ENCODE measurements at regions of chr4 and their contacts with region 1.

Region 1: DNA sequence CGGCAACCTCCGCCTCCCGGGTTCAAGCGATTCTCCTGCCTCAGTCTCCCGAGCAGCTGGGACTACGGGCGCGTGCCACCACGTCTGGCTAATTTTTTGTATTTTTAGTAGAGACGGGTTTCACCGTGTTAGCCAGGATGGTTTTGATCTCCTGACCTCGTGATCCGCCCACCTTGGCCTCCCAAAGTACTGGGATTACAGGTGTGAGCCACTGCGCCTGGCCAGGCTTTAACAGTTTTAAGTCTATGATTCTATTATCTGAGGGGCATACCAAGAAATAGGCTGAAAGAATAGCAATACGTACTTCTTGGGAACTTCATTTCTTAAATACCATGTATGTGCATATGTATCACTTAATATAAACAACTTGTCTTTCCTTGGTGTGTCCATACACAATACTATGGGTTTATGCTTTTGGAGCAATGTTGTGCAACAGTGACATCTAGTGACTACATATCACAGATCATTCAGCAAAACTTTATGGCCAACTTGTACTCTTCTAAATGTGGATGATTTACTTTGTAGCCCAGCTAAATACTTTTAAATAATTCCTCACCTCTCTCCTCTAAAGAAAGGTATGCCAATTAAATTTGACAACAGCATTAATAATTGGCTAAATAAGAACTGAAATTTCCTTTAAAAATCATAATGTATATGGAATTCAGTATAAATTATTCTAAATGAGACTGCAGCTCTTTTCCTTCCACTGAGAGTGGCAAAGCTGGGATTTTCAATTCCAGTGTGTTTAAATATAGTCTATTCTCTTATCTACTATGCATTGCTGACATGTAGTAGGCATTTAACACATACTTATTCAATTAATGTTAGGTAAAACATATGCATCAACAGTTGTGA is 10.4 kb downstream of the SLC9B1 start:
- DNase-seq: peak; percentile 50
- H3K4me3 ChIP-seq: no peak overlapping the region
- H3K27ac ChIP-seq: no peak overlapping the region
- H3K27me3 ChIP-seq: no peaks in the 10 kb centered on the region
- CTCF ChIP-seq: peak; percentile 83

Region 2: DNA sequence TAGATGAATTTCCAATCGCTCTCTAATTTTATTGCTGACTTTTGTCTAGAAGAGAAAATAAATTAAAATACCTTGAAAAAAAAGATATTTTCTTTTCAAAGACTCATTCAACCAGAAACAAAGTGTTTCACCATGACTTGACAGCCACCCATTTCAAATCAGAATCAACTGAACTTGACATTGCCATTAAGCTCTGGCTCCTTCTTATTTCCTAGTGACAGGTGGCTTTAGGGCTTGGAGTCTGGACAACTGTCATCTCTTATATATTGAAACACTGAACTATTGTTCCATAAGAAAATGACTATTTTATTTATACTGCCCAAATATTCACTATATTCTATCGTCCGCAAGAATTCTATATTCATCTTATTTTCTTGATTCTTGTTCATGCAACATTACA is 893.0 kb before region 1 on chr4:
- CTCF ChIA-PET with region 1: no interaction called
- POLR2A ChIA-PET with region 1: no interaction called
- DNase-seq: no peak
- H3K4me3 ChIP-seq: no peak overlapping the region
- H3K27ac ChIP-seq: no peak overlapping the region
- H3K27me3 ChIP-seq: no peaks in the 10 kb centered on the region
- CTCF ChIP-seq: no peak

Region 3: GRCh38 chr4:102620697-102621497 is 388.2 kb before region 1 on chr4:
- CTCF ChIA-PET with region 1: interaction called, 50 read pairs
- POLR2A ChIA-PET with region 1: no interaction called
- DNase-seq: peak; percentile 38
- H3K4me3 ChIP-seq: peak overlapping the region; percentile 3; the same call in 1 of the 2 replicates
- H3K27ac ChIP-seq: no peak overlapping the region
- H3K27me3 ChIP-seq: no peaks in the 10 kb centered on the region
- CTCF ChIP-seq: peak; percentile 71

Region 4: DNA sequence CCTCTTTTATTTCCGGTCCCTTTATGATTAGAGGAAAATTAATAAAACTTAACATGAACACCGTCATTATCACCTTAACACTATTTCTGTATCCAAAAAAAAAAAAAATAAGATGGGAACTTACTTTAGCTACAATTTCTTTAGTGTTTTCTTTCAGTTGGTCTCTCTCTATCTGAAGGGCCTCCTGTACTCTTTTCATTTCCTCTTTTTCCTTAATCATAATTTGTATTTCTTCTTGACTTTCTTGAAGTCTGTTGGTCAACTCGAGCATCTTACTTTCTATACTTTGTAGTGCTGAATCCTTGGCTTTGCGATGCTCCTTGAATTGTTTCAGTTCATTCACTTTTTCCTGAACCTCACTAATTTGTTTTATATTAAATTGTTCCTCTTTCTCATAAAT is 135.8 kb after region 1 on chr4:
- CTCF ChIA-PET with region 1: no interaction called
- POLR2A ChIA-PET with region 1: no interaction called
- DNase-seq: no peak
- H3K4me3 ChIP-seq: no peak overlapping the region
- H3K27ac ChIP-seq: no peak overlapping the region
- H3K27me3 ChIP-seq: no peaks in the 10 kb centered on the region
- CTCF ChIP-seq: no peak